ENCODE measurements at regions of chr1 and their contacts with region 1.

Region 1: GRCh38 chr1:21624578-21625389 is 44.4 kb downstream of the RAP1GAP start:
- DNase-seq: peak in 7 of 10 donors; percentile 41 to 94 (median 56)

Region 2: GRCh38 chr1:21586846-21587601 is 37.8 kb before region 1 on chr1:
- intact Hi-C with region 1: no loop called
- DNase-seq: no peak

Region 3: GRCh38 chr1:21651214-21652042 is 26.6 kb after region 1 on chr1:
- intact Hi-C with region 1: loop called (anchors 2 kb)
- DNase-seq: peak in 5 of 10 donors; percentile 52 to 95 (median 78)

Measured in posterior cingulate gyrus (tissue), 11 donors.